Calu3 (cell line): ENCODE measurements at regions of chr14 and their contacts with region 1.

Region 1: GRCh38 chr14:73173092-73173735 is 36.9 kb downstream of the PSEN1 start:
- DNase-seq: no peak
- H3K4me3 Mint-ChIP-seq: no peak overlapping the region
- H3K27ac Mint-ChIP-seq: no peak overlapping the region
- H3K4me1 Mint-ChIP-seq: no peaks in the 10 kb centered on the region
- H3K27me3 Mint-ChIP-seq: no peaks in the 10 kb centered on the region
- CTCF ChIP-seq: peak; percentile 6

Region 2: DNA sequence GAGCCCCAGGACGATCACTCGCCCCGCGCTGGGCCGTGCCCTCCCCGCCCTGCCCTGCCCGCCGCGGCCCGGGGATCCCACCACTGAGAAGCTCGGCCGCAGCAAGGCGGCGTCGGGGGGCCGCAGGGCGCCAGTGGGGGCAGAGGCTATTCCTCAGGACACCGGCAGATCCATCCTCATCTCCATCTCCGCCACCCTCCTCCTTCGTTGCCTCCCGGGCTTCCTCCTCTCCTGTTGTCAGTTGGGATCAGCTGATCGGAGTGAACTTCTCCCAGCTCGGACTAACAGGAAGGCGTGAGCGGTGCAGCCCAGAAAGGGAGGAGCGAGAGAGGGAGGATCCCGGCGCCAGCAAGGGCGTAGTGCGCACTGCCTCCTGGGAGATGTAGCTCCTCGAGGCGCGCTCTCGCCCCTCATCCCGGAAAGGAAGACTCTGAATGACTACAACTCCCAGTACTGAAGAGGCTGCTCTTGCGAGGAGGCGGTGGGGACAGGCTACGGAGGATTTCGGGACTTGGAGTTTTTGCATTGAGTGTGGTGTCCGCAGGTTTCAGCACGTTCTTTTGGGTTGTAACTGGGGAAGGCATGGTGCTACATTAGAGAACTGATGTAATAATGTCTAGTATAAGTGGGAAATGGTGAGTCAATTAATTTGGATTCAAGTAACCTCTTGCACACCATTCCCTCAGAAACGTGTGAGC is 146.2 kb before region 1 on chr14 and contains the start of gene ZFYVE1:
- CTCF ChIA-PET with region 1: no interaction called
- intact Hi-C with region 1: no loop called
- DNase-seq: peak; percentile 95
- H3K4me3 Mint-ChIP-seq: peak within 1 kb of the TSS; percentile 80
- H3K27ac Mint-ChIP-seq: peak within 1 kb of the TSS; percentile 66
- H3K4me1 Mint-ChIP-seq: peaks cover 7% of the 10 kb centered on the region
- H3K27me3 Mint-ChIP-seq: no peaks in the 10 kb centered on the region
- CTCF ChIP-seq: no peak
- total RNA-seq, gene ZFYVE1: 10.6 and 11.9 TPM in 2 replicates

Region 3: DNA sequence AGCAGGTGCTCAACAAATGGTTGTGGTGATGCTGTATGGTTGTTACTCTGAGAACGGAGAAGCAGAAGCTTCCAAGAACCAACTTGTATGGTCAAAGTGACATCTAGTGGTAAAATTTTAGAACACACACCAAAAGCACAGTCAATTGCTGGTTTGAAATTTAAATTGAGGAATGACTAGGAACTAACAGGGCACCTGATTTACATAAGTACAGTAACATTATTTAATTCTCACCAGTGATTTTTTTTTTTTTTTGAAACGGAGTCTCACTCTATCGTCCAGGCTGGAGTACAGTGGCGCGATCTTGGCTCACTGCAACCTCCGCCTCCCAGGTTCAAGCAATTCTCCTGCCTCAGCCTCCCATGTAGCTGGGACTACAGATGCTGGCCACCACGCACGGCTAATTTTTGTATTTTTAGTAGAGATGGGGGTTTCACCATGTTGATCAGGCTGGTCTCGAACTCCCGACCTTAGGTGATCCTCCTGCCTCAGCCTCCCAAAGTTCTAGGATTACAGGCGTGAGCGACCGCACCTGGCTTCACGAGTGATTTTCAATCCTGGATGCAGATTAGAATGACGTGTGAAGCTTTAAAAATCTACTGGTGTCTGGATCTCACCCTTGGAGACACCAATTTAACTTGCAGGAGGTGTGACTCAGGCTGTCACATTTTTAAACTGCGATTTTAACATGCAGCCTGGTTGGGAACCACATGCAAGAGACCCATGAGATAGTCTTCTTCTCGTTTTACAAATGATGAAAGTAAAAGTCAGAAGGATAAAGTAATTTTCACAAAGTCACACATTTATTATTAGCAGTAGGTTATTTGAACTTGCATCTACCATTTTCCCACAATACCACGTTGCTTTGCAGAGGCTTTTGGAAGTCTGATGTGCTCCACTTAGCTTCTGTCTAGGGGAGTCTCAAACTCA is 299.2 kb after region 1 on chr14:
- CTCF ChIA-PET with region 1: interaction called, 4 read pairs
- intact Hi-C with region 1: loop called (anchors 1 kb)
- DNase-seq: peak; percentile 25
- H3K4me3 Mint-ChIP-seq: no peak overlapping the region
- H3K27ac Mint-ChIP-seq: no peak overlapping the region
- H3K4me1 Mint-ChIP-seq: no peaks in the 10 kb centered on the region
- H3K27me3 Mint-ChIP-seq: no peaks in the 10 kb centered on the region
- CTCF ChIP-seq: peak; percentile 51